Adrenal gland (tissue), 19 donors: ENCODE measurements at regions of chr2 and their contacts with region 1.

Region 1: DNA sequence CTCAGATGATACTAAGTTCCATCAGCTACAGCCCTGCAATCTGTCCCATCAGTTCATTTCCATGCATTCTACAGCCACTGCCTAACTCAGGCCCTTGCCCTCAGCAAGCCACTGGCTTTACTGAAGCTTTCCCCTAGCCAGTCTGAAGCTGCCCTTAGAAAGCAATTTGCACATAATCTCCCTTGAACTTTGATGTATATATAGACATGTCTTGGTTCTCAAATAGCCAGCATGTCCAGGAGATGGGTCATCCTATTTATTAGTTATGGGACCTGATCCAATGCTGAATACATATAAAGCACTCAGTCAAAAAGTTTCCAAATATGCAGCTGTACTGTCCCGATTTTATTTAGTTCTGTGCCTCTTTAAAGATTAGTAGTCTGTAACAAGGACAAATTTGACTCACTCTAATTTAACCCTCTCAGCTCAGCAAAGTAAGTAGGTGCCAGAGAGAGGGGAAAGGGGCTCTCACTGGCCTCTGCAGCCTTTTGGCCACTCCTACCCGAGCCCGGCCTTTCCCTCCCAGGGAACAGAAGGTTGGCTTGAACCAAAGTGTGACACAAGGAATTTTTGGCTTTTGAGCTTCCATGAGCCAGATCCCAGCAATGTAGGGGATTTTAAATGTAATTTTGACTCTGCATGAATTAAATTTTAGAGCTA is 70.7 kb downstream of the CCDC93 start:
- DNase-seq: peak in 5 of 7 donors; percentile 13 to 49 (median 39)
- H3K4me3 ChIP-seq: no peak overlapping the region
- H3K27ac ChIP-seq: peak overlapping the region in 3 of 5 donors; percentile 33 to 64 (median 63)
- H3K4me1 ChIP-seq: peaks cover 10 to 21% of the 10 kb centered on the region in 2 donors
- H3K27me3 ChIP-seq: no peaks in the 10 kb centered on the region
- CTCF ChIP-seq: no peak
- POLR2A ChIP-seq: no peak

Region 2: DNA sequence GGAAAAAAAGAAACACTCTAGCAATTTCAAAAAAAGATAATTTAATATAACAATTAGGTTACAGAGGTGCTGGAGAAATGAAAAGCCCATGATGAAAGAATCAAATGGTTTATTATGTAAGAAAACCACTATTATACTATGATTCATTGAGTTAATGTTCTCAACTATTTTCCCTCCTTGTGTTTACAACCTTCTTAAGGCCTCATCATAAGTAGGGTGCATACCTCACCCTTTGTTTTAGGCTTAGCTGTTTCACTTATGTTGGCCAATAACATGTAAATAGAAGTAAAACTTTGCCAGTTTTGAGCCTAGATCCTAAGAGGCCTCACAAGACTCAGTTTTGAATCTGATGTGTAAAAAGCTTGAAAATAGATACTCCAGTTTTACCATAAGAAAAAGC is 547.0 kb before region 1 on chr2:
- intact Hi-C with region 1: no loop called
- DNase-seq: no peak
- H3K4me3 ChIP-seq: no peak overlapping the region
- H3K27ac ChIP-seq: no peak overlapping the region
- H3K4me1 ChIP-seq: no peaks in the 10 kb centered on the region
- H3K27me3 ChIP-seq: no peaks in the 10 kb centered on the region
- CTCF ChIP-seq: no peak
- POLR2A ChIP-seq: no peak

Region 3: DNA sequence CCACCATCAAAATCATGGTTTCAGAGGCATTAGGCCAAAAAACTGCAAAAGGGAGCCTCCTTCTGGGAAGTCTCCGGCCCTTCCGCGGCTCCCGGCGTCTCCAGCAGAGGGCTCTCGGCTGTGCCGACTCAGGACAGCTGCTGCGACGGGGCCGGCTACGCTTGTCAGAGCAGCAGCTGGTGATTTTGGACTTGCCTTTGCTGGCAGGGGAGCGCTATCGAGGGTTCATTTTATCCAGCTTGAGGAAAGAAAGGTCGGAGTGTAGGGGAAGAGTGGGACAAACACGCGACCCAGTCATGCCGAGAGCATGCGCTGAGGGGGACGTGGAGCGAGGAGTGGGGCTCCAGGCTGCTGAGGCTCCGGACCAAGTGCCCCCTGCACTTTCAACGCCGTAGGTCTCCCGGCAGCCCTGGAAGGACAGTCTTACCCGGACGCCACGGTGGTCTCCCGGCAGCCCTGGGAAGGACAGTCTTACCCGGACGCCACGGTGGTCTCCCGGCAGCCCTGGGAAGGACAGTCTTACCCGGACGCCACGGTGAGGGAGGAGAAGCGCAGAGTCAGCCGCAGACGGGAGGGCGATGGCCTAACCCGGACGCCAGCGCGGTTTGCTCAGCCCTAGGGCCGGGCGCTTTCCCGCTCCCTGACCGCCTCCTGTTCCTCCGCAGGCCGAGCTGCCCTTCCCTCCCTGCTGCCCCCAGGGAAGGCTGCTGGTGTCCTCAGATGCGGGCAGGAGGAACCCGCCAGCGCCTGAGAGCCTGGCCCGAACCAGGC is 107.0 kb before region 1 on chr2:
- intact Hi-C with region 1: loop called in 1 of 2 experiments (anchors 10 kb)
- DNase-seq: peak; percentile 84 to 93 (median 90)
- H3K4me3 ChIP-seq: peak overlapping the region in 2 of 4 donors; percentile 20 to 50
- H3K27ac ChIP-seq: peak overlapping the region in 3 of 5 donors; percentile 8 to 67 (median 32)
- H3K4me1 ChIP-seq: no peaks in the 10 kb centered on the region
- H3K27me3 ChIP-seq: no peaks in the 10 kb centered on the region
- CTCF ChIP-seq: peak; percentile 64 to 83 (median 74)
- POLR2A ChIP-seq: no peak

Region 4: DNA sequence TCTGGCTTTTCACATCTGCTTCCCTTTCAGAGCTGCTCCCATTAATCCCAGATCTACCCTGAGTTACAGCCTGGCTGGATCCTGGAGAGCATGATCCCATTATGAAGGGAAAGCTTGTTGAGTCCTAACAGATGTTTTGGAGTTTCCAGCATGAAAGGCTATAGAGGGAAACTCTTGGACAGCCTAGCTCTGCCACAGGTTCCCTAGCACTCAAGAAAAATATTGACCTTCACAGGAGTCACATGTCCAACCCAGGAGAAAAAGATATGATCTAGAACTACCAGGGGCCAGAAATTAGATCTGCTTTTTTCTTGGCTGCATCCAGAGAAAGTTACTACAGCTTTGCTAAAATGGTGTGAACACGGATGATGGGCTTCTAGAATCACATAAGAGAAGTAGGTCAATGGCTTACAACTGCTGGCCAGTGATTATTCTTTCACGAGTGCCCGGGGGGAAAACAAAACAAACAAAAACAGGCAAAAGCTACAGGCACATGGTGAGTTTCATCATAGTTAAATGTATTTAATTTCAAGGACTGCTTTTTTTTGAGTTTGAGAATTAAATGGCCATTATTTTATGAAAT is 54.8 kb after region 1 on chr2:
- intact Hi-C with region 1: loop called in 1 of 2 experiments (anchors 10 kb)
- DNase-seq: no peak
- H3K4me3 ChIP-seq: no peak overlapping the region
- H3K27ac ChIP-seq: peak overlapping the region in 1 of 5 donors; percentile 17
- H3K4me1 ChIP-seq: peaks cover 0 to 11% of the 10 kb centered on the region in 2 donors
- H3K27me3 ChIP-seq: no peaks in the 10 kb centered on the region
- CTCF ChIP-seq: no peak
- POLR2A ChIP-seq: no peak

Region 5: DNA sequence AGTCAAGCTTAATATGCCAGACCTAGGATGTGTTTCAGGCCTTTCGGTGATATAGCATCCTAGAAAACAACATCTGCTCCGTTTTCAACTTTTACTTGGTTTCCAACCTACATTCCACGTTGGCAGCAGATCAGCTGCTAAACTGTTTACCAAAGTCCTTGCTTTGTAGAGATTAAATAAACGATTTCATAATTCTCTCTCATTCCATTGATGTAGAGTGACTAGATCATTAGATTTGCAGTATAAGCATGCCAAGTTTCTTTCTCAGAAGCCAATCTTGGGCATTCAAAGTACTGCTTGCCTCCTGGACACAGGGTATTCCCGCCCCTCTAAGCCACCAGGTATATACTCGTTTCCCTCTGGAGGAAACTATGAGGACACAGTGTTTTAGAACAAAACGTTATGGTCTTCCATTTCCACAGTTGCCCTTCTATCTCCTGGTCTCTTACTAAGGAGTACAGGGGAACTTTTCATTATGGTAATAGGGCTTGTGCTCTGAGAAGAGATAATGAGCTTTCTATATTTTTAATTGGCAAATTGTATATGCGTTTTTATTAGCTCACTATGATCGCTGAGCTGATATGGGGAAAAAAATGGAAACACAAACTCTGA is 134.6 kb after region 1 on chr2:
- intact Hi-C with region 1: no loop called
- DNase-seq: no peak
- H3K4me3 ChIP-seq: no peak overlapping the region
- H3K27ac ChIP-seq: no peak overlapping the region
- H3K4me1 ChIP-seq: no peaks in the 10 kb centered on the region
- H3K27me3 ChIP-seq: no peaks in the 10 kb centered on the region
- CTCF ChIP-seq: no peak
- POLR2A ChIP-seq: no peak